Activated T-helper 2 cell treated with anti-CD3 and anti-CD28 coated beads, Interferon-gamma antibody, Interleukin-2, Interleukin-4, amounts not matched to agents 10 μg/mL and 5 μg/mL and 100 μg/mL, durations not matched to agents 14 hours and 24 hours and 36 hours (primary cell): ENCODE measurements at regions of chr1 and their contacts with region 1.

Region 1: GRCh38 chr1:147545133-147545532 is 3.8 kb downstream of the BCL9 start:
- DNase-seq: peak; percentile 68
- H3K4me3 Mint-ChIP-seq: peak overlapping the region; percentile 38
- H3K27ac Mint-ChIP-seq: peak overlapping the region; percentile 75
- H3K4me1 Mint-ChIP-seq: peaks cover 57% of the 10 kb centered on the region
- H3K27me3 Mint-ChIP-seq: no peaks in the 10 kb centered on the region

Region 2: DNA sequence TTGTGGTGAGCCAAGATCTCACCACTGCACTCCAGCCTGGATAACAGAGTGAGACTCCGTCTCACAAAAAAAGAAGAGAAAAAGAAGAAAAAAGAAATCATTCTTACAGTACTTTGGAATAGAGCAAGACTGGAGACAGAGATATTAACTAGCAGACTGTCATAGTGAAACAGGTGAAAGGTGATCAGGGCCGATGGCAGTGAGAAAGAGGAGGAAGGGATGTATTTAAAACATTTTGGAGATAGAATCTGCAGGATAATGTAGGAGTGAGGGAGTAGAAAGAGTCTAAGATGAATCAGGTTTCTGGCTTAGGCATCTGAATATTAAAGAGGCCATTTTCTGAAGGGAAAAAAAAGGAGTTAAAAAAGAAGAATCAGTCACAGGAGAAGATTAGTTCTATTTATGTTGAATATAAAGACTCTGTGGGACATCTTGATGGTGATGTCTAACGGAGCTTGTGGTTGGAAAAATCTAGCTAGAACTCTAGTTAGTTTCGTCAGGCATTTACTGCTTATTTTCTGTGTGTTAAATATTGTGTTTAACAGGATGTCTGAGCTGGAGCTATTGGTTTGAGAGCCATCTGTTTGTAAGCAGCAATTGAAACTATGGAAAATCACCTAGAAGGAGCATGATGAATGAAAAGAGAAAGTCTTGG is 24.6 kb after region 1 on chr1:
- intact Hi-C with region 1: loop called (anchors 1 kb)
- DNase-seq: no peak
- H3K4me3 Mint-ChIP-seq: no peak overlapping the region
- H3K27ac Mint-ChIP-seq: peak overlapping the region; percentile 48
- H3K4me1 Mint-ChIP-seq: peaks cover 14% of the 10 kb centered on the region
- H3K27me3 Mint-ChIP-seq: peaks cover 10% of the 10 kb centered on the region

Region 3: DNA sequence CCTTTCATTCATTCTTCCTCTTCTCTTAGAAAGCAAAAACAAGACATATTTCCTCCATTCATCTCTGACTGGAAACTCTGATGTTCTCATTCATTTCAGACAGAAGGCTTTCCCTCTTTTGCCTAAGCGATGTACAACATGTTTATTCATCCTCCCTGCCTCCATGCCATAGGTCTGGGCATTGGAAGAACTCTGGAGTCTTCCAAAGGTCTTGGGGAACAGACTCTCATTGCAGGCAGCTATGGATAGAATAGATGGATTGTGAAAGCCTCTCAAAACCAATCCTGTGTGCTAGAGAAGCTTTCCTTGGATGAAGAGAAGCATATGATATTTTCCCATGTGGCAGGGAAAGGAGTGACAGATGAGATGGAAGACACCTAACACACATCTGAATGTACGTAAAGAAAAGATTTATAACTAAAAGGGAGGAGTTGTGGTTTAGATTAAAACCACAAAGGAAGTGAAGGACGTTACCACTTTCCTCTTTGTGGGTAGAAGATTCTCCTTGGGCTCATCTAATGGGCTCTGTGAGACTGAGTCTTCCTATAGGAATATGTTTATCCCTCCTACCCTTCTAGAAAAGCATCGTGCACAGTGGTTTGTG is 34.9 kb after region 1 on chr1:
- intact Hi-C with region 1: loop called (anchors 2 kb)
- DNase-seq: no peak
- H3K4me3 Mint-ChIP-seq: peak overlapping the region; percentile 28
- H3K27ac Mint-ChIP-seq: peak overlapping the region; percentile 58
- H3K4me1 Mint-ChIP-seq: peaks cover 29% of the 10 kb centered on the region
- H3K27me3 Mint-ChIP-seq: peaks cover 32% of the 10 kb centered on the region

Region 4: DNA sequence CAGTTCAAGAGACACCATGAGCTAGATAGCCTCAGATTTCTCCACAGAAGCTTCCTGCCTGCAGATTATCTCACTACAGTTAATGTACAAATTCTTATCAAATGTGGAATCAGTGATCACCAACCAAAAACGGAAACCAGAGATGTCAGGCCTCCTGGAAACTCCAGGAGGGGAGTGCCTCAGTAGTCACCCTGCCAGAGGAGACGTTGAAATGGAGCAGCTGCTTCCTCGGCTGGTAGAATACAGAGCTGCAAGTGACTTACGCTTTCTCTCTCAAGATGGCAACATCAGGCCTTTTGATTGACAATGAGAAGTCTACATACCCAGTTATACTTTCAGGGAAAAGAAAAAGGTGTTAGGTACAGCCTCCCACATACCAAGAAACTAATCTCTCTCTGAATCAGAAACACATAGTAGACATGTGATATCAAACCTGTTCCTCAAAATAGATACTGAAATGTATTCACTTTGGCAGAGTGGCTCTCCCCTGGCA is 73.0 kb after region 1 on chr1:
- intact Hi-C with region 1: loop called (anchors 1 kb)
- DNase-seq: peak; percentile 74
- H3K4me3 Mint-ChIP-seq: peak overlapping the region; percentile 48
- H3K27ac Mint-ChIP-seq: peak overlapping the region; percentile 85
- H3K4me1 Mint-ChIP-seq: peaks cover 43% of the 10 kb centered on the region
- H3K27me3 Mint-ChIP-seq: no peaks in the 10 kb centered on the region

Region 5: GRCh38 chr1:147640553-147641165 is 95.5 kb after region 1 on chr1:
- intact Hi-C with region 1: loop called (anchors 5 kb)
- DNase-seq: peak; percentile 68
- H3K4me3 Mint-ChIP-seq: no peak overlapping the region
- H3K27ac Mint-ChIP-seq: peak overlapping the region; percentile 15
- H3K4me1 Mint-ChIP-seq: peaks cover 45% of the 10 kb centered on the region
- H3K27me3 Mint-ChIP-seq: no peaks in the 10 kb centered on the region

Region 6: GRCh38 chr1:148334339-148335130 is 789.4 kb after region 1 on chr1:
- intact Hi-C with region 1: loop called (anchors 10 kb)
- DNase-seq: peak; percentile 73
- H3K4me3 Mint-ChIP-seq: peak overlapping the region; percentile 94
- H3K27ac Mint-ChIP-seq: peak overlapping the region; percentile 99
- H3K4me1 Mint-ChIP-seq: peaks cover 32% of the 10 kb centered on the region
- H3K27me3 Mint-ChIP-seq: peaks cover 23% of the 10 kb centered on the region